ENCODE measurements at regions of chr4 and their contacts with region 1.

Region 1: GRCh38 chr4:156169011-156169410 is 215.3 kb upstream of the CTSO start:
- DNase-seq: peak in 1 of 2 experiments; percentile 28
- H3K4me3 ChIP-seq: no peak overlapping the region
- H3K27ac ChIP-seq: no peak overlapping the region
- H3K4me1 ChIP-seq: no peaks in the 10 kb centered on the region
- H3K27me3 ChIP-seq: no peaks in the 10 kb centered on the region
- CTCF ChIP-seq: peak; percentile 43; the same call in 1 of the 2 replicates

Region 2: DNA sequence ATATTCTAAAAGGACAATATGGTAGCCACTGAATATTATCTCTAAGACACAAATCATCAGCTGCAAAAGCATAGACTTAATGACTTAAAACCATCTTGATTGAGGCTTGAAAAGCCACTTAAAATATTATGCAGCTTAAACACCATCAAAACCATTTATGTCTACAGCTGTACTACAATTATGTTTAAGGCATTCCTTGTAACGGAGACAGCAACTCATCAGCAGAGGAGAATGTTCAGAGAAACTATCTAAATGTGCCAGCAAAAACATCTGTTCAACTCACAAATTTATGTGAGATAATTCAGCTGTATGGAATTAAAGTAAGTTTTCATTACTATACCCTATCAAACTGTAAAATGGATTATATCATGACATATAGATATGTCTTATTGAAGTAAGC is 67.4 kb before region 1 on chr4:
- CTCF ChIA-PET with region 1: no interaction called
- POLR2A ChIA-PET with region 1: no interaction called
- intact Hi-C with region 1: no loop called
- DNase-seq: no peak
- H3K4me3 ChIP-seq: no peak overlapping the region
- H3K27ac ChIP-seq: no peak overlapping the region
- H3K4me1 ChIP-seq: no peaks in the 10 kb centered on the region
- H3K27me3 ChIP-seq: no peaks in the 10 kb centered on the region
- CTCF ChIP-seq: no peak

Region 3: GRCh38 chr4:156378033-156378665 is 209.1 kb after region 1 on chr4:
- CTCF ChIA-PET with region 1: no interaction called
- POLR2A ChIA-PET with region 1: no interaction called
- intact Hi-C with region 1: no loop called
- DNase-seq: no peak
- H3K4me3 ChIP-seq: no peak overlapping the region
- H3K27ac ChIP-seq: no peak overlapping the region
- H3K4me1 ChIP-seq: no peaks in the 10 kb centered on the region
- H3K27me3 ChIP-seq: no peaks in the 10 kb centered on the region
- CTCF ChIP-seq: peak; percentile 52

Region 4: DNA sequence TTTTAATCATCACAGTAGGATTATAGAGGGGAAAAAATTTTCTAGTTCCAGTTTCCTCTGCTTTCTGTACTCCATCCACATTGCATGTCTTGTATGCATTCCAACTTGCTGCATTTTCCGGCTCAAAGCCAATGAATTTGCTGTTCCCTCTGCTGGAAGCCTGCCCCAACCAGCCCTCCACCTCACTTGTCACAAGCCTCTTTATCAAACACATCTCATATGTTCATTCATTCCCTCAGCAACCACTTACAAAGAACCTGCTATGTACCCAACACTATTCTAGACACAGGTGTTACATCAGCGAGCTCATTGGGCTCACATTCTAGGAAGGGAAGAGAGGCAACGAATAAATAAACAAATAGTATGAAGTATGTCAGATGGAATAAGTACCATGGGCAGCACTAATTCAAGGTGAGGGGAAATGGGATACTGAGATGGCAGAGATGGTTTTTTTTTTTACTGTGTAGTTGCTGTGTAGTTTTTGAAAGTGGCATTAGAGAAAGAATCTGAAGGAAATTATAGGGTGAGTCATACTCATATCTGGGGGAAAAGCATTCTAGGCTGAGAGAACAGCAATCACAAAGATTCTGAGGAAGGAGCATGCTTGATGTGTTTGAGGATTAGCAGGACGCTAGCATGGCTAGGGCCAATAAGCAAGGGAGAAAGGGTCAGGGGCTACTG is 470.1 kb after region 1 on chr4:
- CTCF ChIA-PET with region 1: interaction called, 11 read pairs
- POLR2A ChIA-PET with region 1: no interaction called
- intact Hi-C with region 1: no loop called
- DNase-seq: peak in 1 of 2 experiments; percentile 1
- H3K4me3 ChIP-seq: no peak overlapping the region
- H3K27ac ChIP-seq: no peak overlapping the region
- H3K4me1 ChIP-seq: 0 out of 2 replicates have a peak, but pooled peaks cover 3% of the 10 kb centered on the region
- H3K27me3 ChIP-seq: no peaks in the 10 kb centered on the region
- CTCF ChIP-seq: no peak

Region 5: GRCh38 chr4:157045507-157046127 is 876.6 kb after region 1 on chr4:
- CTCF ChIA-PET with region 1: no interaction called
- POLR2A ChIA-PET with region 1: no interaction called
- intact Hi-C with region 1: loop called (anchors 2 kb)
- DNase-seq: peak; percentile 25 to 52
- H3K4me3 ChIP-seq: no peak overlapping the region
- H3K27ac ChIP-seq: no peak overlapping the region
- H3K4me1 ChIP-seq: no peaks in the 10 kb centered on the region
- H3K27me3 ChIP-seq: no peaks in the 10 kb centered on the region
- CTCF ChIP-seq: peak; percentile 70